Esophagus squamous epithelium (tissue), 5 donors: ENCODE measurements at regions of chr19 and their contacts with region 1.

Region 1: DNA sequence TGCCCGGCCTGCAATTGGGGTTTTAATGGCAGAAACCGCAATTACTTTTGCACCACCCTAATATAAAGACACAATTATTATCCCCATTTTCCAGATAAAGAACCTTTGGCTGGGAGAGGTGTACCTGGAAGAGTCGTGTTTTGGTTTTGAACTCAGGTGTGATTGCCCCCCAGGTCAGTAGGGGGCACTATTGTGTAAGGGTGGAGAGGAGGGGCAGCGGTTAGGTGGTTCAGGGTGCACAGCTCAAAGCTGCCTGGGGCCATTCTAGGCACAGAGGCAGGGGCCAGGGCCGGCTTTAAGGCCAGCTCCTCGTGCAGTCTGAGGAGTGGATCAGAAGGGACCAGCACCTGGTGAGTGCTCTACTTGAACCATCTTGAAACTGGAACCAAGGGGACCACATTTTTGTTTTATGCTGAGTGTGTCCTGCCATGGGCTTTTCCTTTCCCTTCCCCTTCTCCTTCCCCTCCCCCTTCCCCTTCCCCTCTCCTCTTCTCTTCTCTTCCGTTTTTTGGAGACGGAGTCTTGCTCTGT is 5.8 kb upstream of the FCGRT start:
- DNase-seq: no peak
- H3K4me3 ChIP-seq: no peak overlapping the region
- H3K27ac ChIP-seq: no peak overlapping the region
- H3K4me1 ChIP-seq: peaks cover 0 to 30% (median 4%) of the 10 kb centered on the region in 3 donors
- H3K27me3 ChIP-seq: no peaks in the 10 kb centered on the region
- CTCF ChIP-seq: peak; percentile 69 to 83 (median 80)
- POLR2A ChIP-seq: no peak

Region 2: DNA sequence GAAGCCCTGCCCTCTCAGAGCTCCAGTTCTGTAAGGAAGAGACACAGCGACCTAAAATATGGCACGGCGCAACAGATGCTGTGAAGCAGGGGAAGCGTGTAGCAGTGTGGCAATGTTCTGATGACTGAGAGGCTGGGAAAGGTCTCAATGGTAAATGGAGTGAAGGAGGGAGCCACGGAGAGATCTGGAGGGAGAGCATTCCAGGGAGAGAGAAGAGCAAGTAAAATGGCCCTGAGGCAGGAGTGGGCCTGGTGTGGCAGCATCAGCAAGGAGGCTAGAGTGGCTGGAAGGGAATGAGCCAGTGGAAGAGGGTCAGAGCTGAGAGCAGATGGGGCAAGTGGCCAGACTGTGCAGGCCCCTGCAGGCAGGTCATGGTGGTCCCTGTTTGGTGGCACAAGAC is 37.5 kb after region 1 on chr19:
- intact Hi-C with region 1: loop called (anchors 5 kb)
- DNase-seq: no peak
- H3K4me3 ChIP-seq: no peak overlapping the region
- H3K27ac ChIP-seq: no peak overlapping the region
- H3K4me1 ChIP-seq: peaks cover 0 to 12% (median 0%) of the 10 kb centered on the region in 3 donors
- H3K27me3 ChIP-seq: no peaks in the 10 kb centered on the region
- CTCF ChIP-seq: no peak
- POLR2A ChIP-seq: no peak

Region 3: GRCh38 chr19:49570138-49570856 is 63.7 kb after region 1 on chr19:
- intact Hi-C with region 1: loop called (anchors 2 kb)
- DNase-seq: no peak
- H3K4me3 ChIP-seq: no peak overlapping the region
- H3K27ac ChIP-seq: no peak overlapping the region
- H3K4me1 ChIP-seq: peaks cover 0 to 44% (median 12%) of the 10 kb centered on the region in 3 donors
- H3K27me3 ChIP-seq: no peaks in the 10 kb centered on the region
- CTCF ChIP-seq: peak; percentile 96 to 99 (median 98)
- POLR2A ChIP-seq: no peak

Region 4: GRCh38 chr19:49601482-49602038 is 94.9 kb after region 1 on chr19:
- intact Hi-C with region 1: no loop called
- DNase-seq: no peak
- H3K4me3 ChIP-seq: no peak overlapping the region
- H3K27ac ChIP-seq: no peak overlapping the region
- H3K4me1 ChIP-seq: no peaks in the 10 kb centered on the region
- H3K27me3 ChIP-seq: no peaks in the 10 kb centered on the region
- CTCF ChIP-seq: no peak
- POLR2A ChIP-seq: no peak

Region 5: DNA sequence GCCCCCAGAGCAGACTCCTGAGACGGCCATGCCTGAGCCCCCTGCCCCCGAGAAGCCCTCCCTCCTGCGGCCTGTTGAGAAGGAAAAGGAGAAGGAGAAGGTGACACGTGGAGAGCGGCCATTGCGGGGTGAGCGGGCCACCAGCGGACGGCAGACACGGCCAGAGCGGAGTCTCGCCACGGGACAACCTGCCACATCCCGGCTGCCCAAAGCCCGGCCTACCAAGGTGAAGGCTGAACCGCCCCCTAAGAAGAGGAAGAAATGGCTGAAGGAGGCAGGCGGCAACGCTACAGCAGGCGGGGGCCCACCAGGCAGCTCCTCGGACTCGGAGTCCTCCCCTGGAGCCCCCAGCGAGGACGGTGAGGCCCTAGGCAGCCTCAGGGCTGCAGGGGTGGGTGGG is 109.2 kb after region 1 on chr19:
- intact Hi-C with region 1: no loop called
- DNase-seq: no peak
- H3K4me3 ChIP-seq: no peak overlapping the region
- H3K27ac ChIP-seq: no peak overlapping the region
- H3K4me1 ChIP-seq: peaks cover 0 to 29% (median 11%) of the 10 kb centered on the region in 3 donors
- H3K27me3 ChIP-seq: no peaks in the 10 kb centered on the region
- CTCF ChIP-seq: no peak
- POLR2A ChIP-seq: no peak